Spleen (tissue), 13 donors: ENCODE measurements at regions of chrX and their contacts with region 1.

Region 1: GRCh38 chrX:138740341-138740740 is 28.8 kb upstream of the FGF13 start:
- DNase-seq: no peak
- H3K4me3 ChIP-seq: no peak overlapping the region
- H3K27ac ChIP-seq: no peak overlapping the region
- H3K4me1 ChIP-seq: no peaks in the 10 kb centered on the region
- H3K27me3 ChIP-seq: peaks cover 0 to 15% (median 0%) of the 10 kb centered on the region in 7 donors
- CTCF ChIP-seq: no peak
- POLR2A ChIP-seq: no peak

Region 2: DNA sequence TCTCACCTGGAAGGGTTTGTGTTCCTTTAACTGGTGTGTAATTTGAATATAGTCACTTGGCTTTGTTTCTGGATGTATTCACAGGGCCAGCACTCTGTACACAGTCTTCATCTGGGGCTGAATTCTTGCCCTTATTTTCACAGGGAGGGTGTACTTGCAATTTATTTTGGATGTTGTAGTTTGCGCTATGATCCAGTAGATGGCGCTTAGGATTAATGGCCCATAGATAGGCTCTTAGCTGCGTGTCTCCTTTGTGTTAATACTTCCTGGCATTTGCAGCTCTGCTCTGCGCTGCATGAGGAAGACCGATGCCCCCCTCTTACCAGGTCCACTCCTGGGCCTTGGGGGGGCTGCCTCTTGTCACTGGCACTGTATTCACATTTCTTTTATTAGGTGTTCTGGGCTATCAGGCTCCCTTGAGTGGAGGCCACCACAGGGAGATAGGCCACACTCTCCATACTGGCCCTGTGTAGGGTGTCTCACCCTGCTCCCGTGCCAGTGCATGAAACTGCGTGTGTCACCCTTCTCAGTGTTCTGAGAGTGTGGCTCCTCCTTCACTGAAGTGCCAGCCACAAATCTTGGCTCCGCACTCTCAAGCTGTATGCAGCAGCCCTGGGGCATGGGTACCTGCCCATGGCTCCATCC is 612.2 kb before region 1 on chrX:
- intact Hi-C with region 1: loop called (anchors 10 kb)
- DNase-seq: no peak
- H3K4me3 ChIP-seq: no peak overlapping the region
- H3K27ac ChIP-seq: no peak overlapping the region
- H3K4me1 ChIP-seq: no peaks in the 10 kb centered on the region
- H3K27me3 ChIP-seq: peaks cover 0 to 28% (median 0%) of the 10 kb centered on the region in 7 donors
- CTCF ChIP-seq: peak in 8 of 11 experiments; percentile 23 to 62 (median 46)
- POLR2A ChIP-seq: no peak

Region 3: GRCh38 chrX:138191998-138192397 is 548.3 kb before region 1 on chrX:
- intact Hi-C with region 1: loop called (anchors 5 kb)
- DNase-seq: no peak
- H3K4me3 ChIP-seq: no peak overlapping the region
- H3K27ac ChIP-seq: no peak overlapping the region
- H3K4me1 ChIP-seq: no peaks in the 10 kb centered on the region
- H3K27me3 ChIP-seq: no peaks in the 10 kb centered on the region
- CTCF ChIP-seq: peak in 3 of 11 experiments; percentile 16 to 44 (median 20)
- POLR2A ChIP-seq: no peak

Region 4: GRCh38 chrX:139192637-139192961 is 452.3 kb after region 1 on chrX:
- intact Hi-C with region 1: no loop called
- DNase-seq: no peak
- H3K4me3 ChIP-seq: no peak overlapping the region
- H3K27ac ChIP-seq: no peak overlapping the region
- H3K4me1 ChIP-seq: no peaks in the 10 kb centered on the region
- H3K27me3 ChIP-seq: peaks cover 0 to 43% (median 8%) of the 10 kb centered on the region in 7 donors
- CTCF ChIP-seq: no peak
- POLR2A ChIP-seq: no peak